Esophagus muscularis mucosa (tissue), 4 donors: ENCODE measurements at regions of chr12 and their contacts with region 1.

Region 1: DNA sequence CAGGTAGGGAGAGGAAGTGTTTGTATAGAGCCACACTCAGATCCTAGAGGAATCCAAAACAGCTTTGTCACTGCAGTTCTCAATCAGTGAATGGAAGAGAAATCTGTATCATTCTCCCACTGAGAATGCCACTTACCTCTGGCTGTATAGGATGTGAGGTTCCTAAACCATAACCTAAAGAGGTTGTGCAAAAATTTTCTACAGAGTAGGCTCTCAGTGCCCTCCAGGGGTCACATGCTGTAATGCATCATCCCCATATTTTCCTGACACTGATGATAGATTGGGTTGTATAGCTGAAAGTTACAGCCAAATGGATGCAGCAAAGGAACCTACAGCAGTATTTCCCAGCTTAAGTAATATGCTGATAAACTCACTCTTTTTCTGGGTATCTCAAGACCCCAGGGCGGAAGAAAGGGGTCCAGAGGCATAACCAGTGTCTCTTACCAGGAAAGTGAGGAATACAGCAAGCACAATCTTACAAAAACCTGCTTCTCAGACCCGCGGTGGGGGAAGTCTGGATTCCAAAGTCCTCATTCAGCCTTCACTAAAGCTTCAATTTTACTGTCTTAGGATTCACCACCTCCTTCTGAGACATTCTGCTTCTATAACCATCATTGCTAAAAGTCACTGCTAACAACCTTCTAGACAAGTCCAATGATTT is 3.8 kb downstream of the BCDIN3D start:
- DNase-seq: no peak
- H3K4me3 ChIP-seq: no peak overlapping the region
- H3K27ac ChIP-seq: no peak overlapping the region
- H3K4me1 ChIP-seq: peaks cover 17 to 23% (median 20%) of the 10 kb centered on the region in 4 donors
- H3K27me3 ChIP-seq: no peaks in the 10 kb centered on the region
- CTCF ChIP-seq: peak; percentile 51 to 59 (median 54)
- EP300 ChIP-seq: no peak
- POLR2A ChIP-seq: no peak

Region 2: GRCh38 chr12:49055981-49056754 is 782.9 kb before region 1 on chr12:
- intact Hi-C with region 1: no loop called
- DNase-seq: no peak
- H3K4me3 ChIP-seq: peak overlapping the region; percentile 21 to 100 (median 87)
- H3K27ac ChIP-seq: peak overlapping the region; percentile 24 to 98 (median 38)
- H3K4me1 ChIP-seq: peaks cover 42 to 56% (median 50%) of the 10 kb centered on the region in 4 donors
- H3K27me3 ChIP-seq: no peaks in the 10 kb centered on the region
- CTCF ChIP-seq: no peak
- EP300 ChIP-seq: no peak
- POLR2A ChIP-seq: no peak

Region 3: DNA sequence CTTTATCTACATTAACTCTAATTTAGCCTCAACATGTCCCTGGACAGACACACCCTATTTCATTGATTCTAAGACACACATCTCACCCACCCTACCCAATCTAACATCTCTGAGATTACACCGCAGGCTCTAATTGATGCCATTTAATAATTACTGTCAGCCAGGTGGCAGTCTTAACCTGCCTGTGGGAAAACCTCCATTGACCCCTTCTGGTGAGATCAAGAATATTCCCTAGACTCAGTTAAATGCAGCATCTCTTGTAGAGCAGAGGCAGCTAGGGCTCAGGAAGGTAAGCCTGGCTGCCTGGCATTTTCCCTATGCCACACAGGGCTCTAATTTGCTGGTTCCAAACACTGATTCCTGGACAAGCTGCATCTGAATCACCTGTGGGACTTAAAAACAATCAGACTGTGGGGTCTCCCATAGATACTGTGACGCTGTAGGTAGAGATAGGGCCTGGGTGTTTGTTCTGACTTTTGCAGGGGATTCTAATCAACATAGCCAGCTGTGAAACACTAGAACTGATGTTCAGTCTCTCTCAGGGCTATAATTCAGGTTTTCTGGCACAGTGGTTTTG is 285.5 kb before region 1 on chr12:
- intact Hi-C with region 1: no loop called
- DNase-seq: no peak
- H3K4me3 ChIP-seq: no peak overlapping the region
- H3K27ac ChIP-seq: no peak overlapping the region
- H3K4me1 ChIP-seq: peaks cover 9 to 14% (median 11%) of the 10 kb centered on the region in 4 donors
- H3K27me3 ChIP-seq: peaks cover 0 to 19% (median 2%) of the 10 kb centered on the region in 4 donors
- CTCF ChIP-seq: no peak
- EP300 ChIP-seq: no peak
- POLR2A ChIP-seq: no peak

Region 4: DNA sequence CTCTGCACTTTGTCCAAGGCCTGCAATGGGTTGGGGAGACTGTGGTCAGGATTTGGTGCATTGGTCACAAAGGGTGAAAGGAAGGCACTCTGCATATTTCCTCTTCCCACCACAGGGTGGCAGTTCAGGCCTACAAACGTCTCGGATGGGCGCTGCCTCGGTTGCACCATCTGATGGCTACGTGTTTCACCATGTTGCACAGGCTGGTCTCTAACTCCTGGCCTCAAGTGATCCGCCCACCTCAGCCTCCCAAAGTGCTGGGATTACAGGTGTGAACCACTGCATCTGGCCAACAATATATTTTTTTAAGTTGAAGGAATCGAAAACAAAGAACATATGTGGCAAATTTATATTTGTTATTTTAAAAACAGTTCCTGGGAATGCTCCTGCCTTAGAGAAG is 62.7 kb before region 1 on chr12:
- intact Hi-C with region 1: loop called (anchors 5 kb)
- DNase-seq: no peak
- H3K4me3 ChIP-seq: no peak overlapping the region
- H3K27ac ChIP-seq: no peak overlapping the region
- H3K4me1 ChIP-seq: peaks cover 0 to 16% (median 6%) of the 10 kb centered on the region in 4 donors
- H3K27me3 ChIP-seq: peaks cover 0 to 7% (median 0%) of the 10 kb centered on the region in 4 donors
- CTCF ChIP-seq: peak; percentile 64 to 80 (median 79)
- EP300 ChIP-seq: no peak
- POLR2A ChIP-seq: no peak